Activated CD4-positive, alpha-beta T cell treated with anti-CD3 and anti-CD28 coated beads, Interleukin-2, amount 10 ng/mL, durations not matched to agents 24 days and 14 days (primary cell): ENCODE measurements at regions of chr22 and their contacts with region 1.

Region 1: DNA sequence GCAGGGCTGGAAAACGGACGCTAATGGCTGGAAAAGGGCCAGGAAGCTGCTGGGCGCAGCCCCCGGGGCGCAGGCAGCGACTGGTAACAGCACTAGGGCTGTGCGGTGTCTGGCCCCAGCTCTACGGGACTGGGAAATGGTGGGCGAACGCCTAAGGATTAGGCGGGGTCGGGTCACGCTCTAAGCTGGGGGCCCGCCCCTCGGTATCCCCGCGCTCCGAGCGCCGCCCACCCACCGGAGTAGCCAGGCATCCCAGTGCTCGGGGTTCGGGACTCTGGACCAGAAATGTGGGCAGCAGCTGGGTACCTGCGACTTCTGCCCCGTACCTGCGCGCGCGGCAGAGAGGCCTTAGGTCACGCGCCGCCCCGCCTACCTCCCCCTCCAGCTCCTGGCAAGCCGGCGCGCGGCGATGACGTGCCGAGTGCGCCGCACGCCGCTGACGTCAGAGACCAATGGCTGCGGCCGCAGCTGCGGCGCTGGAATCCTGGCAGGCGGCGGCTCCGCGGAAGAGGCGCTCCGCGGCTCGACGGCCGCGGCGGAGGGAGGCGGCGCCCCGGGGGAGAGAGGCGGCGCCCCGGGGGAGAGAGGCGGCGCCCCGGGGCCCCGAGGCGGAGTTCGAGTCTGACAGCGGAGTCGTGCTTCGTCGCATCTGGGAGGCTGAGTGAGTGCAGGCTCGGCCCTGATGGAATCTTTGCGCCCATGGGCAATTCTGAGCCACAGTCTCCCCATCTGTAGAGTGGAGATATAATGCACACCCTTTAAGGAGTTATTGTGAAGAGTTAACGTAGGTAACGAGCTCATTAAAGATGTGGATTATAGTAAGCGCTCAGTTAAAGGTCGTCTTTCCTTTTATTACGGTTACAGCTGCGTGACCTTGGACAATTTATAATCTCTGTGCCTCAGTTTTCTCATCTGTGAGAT is at the starts of genes HPS4 and SRRD:
- DNase-seq: peak; percentile 98
- H3K4me3 Mint-ChIP-seq: peak within 1 kb of the TSS; percentile 78
- H3K27ac Mint-ChIP-seq: peak within 1 kb of the TSS; percentile 89
- H3K4me1 Mint-ChIP-seq: peaks cover 56% of the 10 kb centered on the region
- H3K27me3 Mint-ChIP-seq: no peaks in the 10 kb centered on the region
- total RNA-seq, gene HPS4: 47.0 and 51.2 TPM in 2 replicates
- total RNA-seq, gene SRRD: 28.1 and 32.4 TPM in 2 replicates

Region 2: DNA sequence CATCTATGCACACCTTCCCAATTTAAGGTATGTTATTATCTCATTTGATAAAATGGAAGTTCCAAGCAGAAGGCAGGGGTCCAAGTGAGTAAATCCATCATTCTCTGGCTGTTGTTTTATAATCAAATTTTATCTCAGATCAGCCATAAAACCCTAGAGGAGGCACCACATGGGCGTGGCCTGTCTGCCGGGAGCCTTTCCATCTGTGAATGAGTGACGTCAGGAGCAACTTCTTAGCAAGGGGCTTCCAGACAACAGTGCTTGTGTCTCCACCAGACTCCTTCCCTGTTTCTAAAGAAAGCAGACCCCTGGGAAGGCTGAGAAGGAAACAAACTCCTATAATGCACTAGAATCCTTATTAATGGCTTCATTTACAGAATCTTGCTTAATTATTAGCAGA is 301.0 kb before region 1 on chr22:
- intact Hi-C with region 1: no loop called
- DNase-seq: no peak
- H3K4me3 Mint-ChIP-seq: no peak overlapping the region
- H3K27ac Mint-ChIP-seq: no peak overlapping the region
- H3K4me1 Mint-ChIP-seq: no peaks in the 10 kb centered on the region
- H3K27me3 Mint-ChIP-seq: peaks cover 4% of the 10 kb centered on the region

Region 3: GRCh38 chr22:26398741-26399153 is 85.0 kb before region 1 on chr22:
- intact Hi-C with region 1: loop called (anchors 2 kb)
- DNase-seq: peak; percentile 86
- H3K4me3 Mint-ChIP-seq: no peak overlapping the region
- H3K27ac Mint-ChIP-seq: no peak overlapping the region
- H3K4me1 Mint-ChIP-seq: peaks cover 4% of the 10 kb centered on the region
- H3K27me3 Mint-ChIP-seq: peaks cover 3% of the 10 kb centered on the region

Region 4: DNA sequence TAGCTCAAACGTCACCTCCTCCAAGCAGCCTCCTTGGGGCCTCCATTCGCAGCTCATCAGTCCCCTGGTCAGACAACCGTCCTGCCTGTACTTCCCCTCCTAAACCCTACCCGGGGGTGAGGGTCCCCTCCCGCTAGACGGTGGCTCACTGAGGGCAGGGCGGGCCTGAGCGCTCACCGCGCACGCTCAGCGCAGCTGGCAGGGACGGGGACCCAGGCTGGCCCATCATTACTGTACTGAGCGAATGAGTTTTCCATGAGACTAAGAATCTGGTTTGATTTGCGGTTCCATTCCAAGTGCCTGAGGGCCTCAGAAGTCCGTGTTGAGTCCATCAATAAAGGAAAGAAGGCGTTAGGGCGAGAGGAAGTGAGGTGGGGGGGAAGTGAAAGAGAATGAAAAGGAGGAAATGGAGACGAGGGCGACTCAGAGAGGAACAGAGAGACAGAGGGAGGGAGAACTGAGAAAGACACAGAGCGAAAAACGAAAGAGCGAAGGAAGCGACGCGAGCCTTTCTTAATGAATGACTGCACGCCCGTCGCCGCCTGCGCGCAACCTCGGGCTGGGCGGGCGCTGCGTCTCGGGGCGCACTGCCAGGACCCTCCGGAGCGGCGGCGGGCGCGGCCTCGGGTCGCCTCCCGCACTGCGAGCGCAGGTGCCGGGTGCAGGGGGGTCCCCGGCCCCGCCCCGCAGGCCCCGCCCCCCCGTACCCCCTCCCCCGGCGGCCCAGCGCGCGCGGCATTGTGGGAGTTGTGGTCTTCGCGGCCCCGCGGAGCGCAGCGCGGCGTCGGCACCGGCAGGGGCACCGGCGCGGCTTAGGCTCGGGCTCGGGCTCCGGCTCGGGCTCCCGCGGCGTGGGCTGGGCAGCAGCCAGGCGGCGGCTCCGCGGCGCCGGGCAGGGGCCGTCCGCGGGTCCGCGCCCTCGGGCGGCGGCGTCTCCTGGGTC is 54.9 kb before region 1 on chr22 and contains the start of gene ASPHD2:
- intact Hi-C with region 1: loop called (anchors 1 kb)
- DNase-seq: peak; percentile 94
- H3K4me3 Mint-ChIP-seq: peak within 1 kb of the TSS; percentile 94
- H3K27ac Mint-ChIP-seq: peak within 1 kb of the TSS; percentile 97
- H3K4me1 Mint-ChIP-seq: peaks cover 49% of the 10 kb centered on the region
- H3K27me3 Mint-ChIP-seq: peaks cover 9% of the 10 kb centered on the region
- total RNA-seq, gene ASPHD2: 19.4 and 20.7 TPM in 2 replicates

Region 5: DNA sequence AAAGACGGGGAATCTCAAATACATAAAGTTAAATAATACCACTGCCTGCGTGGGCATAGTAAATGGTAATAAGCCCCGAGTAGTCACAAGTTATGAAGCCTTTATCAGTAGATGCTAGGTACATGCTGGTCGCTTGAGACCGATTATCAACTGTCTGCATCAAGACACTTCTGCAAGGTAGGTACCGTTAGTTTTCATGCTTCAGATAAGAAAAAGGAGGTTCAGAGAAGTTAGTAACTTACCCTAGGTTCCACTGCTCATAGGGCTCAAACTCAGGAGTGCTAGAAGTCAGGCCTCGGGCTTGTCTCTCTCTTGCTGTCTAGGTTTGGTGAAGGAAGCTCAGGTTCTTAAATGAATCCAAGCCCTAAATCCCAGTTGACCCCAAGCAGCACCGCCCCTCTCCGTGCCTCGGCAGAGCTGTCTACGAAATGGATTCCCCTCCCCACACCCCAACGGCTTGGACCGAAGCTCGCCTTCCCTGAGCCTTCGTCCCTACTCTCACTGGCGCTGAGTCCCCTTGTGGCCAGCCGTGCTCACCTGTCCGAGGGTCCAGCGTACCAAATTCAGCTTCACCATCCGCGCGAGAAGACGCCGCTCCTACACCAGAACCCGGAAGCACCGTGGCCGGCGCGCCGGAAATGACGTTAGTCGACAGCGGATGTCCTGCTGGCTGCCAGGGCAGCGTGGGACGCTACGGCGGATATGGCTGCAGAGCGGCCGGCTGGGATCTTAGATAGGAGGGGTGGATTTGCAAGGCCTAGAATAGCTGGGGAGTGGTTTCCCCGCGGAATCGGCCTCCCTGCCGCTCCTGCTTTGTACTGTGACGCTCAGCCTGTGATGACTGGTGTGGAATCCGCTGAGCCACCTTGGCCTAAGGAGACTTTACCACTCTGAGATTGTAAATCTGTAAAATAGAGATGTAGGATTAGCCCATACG is 28.4 kb after region 1 on chr22 and contains the start of gene TFIP11:
- intact Hi-C with region 1: loop called (anchors 1 kb)
- DNase-seq: peak; percentile 99
- H3K4me3 Mint-ChIP-seq: peak within 1 kb of the TSS; percentile 100
- H3K27ac Mint-ChIP-seq: peak within 1 kb of the TSS; percentile 97
- H3K4me1 Mint-ChIP-seq: peaks cover 41% of the 10 kb centered on the region
- H3K27me3 Mint-ChIP-seq: no peaks in the 10 kb centered on the region
- total RNA-seq, gene TFIP11: 51.2 and 56.3 TPM in 2 replicates

Region 6: GRCh38 chr22:26589845-26590736 is 106.4 kb after region 1 on chr22 and contains the start of gene TPST2:
- intact Hi-C with region 1: loop called (anchors 1 kb)
- DNase-seq: peak; percentile 94
- H3K4me3 Mint-ChIP-seq: peak within 1 kb of the TSS; percentile 95
- H3K27ac Mint-ChIP-seq: peak within 1 kb of the TSS; percentile 90
- H3K4me1 Mint-ChIP-seq: peaks cover 66% of the 10 kb centered on the region
- H3K27me3 Mint-ChIP-seq: no peaks in the 10 kb centered on the region
- total RNA-seq, gene TPST2: 30.0 and 33.5 TPM in 2 replicates

Region 7: GRCh38 chr22:26658671-26659478 is 175.2 kb after region 1 on chr22:
- intact Hi-C with region 1: loop called (anchors 2 kb)
- DNase-seq: peak; percentile 93
- H3K4me3 Mint-ChIP-seq: peak overlapping the region; percentile 94
- H3K27ac Mint-ChIP-seq: peak overlapping the region; percentile 95
- H3K4me1 Mint-ChIP-seq: peaks cover 41% of the 10 kb centered on the region
- H3K27me3 Mint-ChIP-seq: peaks cover 4% of the 10 kb centered on the region